ENCODE measurements at regions of chr5 and their contacts with region 1.

Region 1: DNA sequence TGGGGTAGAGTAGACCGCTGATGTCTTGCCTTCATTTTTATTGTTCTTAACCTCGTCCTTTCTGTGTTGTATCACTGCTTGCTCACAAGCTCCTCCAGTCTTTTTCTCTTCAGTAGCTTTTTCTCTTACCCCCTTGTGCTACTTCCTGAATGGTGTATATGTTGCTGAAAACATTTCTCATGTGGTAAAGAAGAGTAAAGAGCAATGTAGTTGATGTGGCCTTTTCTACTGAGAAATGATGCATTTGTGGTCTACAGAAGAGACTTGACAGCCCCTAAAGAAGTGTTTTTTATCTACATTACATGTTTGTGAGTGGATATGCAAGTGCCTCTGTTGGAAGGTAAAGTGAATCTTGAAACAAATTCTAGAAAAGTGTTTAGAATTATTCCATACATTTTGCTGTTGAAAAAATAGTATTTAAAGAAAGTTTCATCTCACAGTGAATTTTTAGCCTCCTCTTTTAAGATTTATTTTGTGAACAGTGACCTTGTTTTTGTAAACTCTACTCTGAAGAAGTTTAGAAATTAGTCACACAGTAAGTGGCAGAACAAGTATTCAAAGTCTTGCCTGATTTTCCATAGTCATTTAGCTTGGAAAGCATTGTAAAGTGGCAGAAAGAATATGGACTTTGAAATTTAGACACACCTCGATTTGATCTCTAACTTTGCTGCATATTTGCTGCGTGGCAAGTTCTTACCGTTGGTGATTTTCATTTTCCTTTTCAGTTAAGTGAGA is 17.4 kb downstream of the CDC42SE2 start:
- DNase-seq: peak in 4 of 10 donors; percentile 64 to 90 (median 82)
- ATAC-seq: peak; percentile 78 to 87
- H3K4me3 Mint-ChIP-seq: peak overlapping the region; percentile 75 to 89 (median 79)
- H3K27ac Mint-ChIP-seq: peak overlapping the region; percentile 83 to 98 (median 96)
- H3K4me1 Mint-ChIP-seq: peaks cover 35 to 94% (median 76%) of the 10 kb centered on the region in 4 donors
- H3K27me3 Mint-ChIP-seq: peaks cover 0 to 7% (median 0%) of the 10 kb centered on the region in 5 donors

Region 2: DNA sequence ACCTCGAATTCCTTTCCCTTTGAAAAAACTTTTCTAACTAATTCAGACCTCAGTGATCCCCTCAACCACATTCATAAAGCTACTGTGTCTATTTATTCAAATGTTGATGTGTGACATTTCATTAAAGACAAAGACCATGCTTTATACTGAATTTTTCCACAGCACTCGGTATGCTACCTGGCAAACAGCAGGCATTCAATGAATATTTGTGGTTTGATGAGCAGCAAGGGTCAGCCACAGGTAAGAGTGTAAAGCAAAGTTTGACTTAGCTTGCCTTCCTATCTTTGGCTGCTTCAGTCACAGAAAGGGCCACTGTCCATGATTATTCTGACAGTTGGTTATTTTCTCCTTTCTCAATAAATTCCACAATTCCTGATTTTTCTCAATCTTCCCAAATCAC is 22.6 kb before region 1 on chr5:
- POLR2A ChIA-PET with region 1: interaction called, 148 read pairs
- DNase-seq: no peak
- ATAC-seq: no peak
- H3K4me3 Mint-ChIP-seq: peak overlapping the region; percentile 65 to 93 (median 78)
- H3K27ac Mint-ChIP-seq: peak overlapping the region; percentile 45 to 98 (median 90)
- H3K4me1 Mint-ChIP-seq: peaks cover 25 to 87% (median 75%) of the 10 kb centered on the region in 4 donors
- H3K27me3 Mint-ChIP-seq: no peaks in the 10 kb centered on the region

Region 3: GRCh38 chr5:131270809-131271208 is 10.5 kb before region 1 on chr5:
- POLR2A ChIA-PET with region 1: interaction called, 148 read pairs
- DNase-seq: no peak
- ATAC-seq: no peak
- H3K4me3 Mint-ChIP-seq: peak overlapping the region; percentile 73 to 98 (median 88)
- H3K27ac Mint-ChIP-seq: peak overlapping the region; percentile 91 to 98 (median 94)
- H3K4me1 Mint-ChIP-seq: peaks cover 34 to 86% (median 66%) of the 10 kb centered on the region in 4 donors
- H3K27me3 Mint-ChIP-seq: no peaks in the 10 kb centered on the region

Region 4: GRCh38 chr5:131382407-131383395 is 101.4 kb after region 1 on chr5:
- POLR2A ChIA-PET with region 1: interaction called, 14 read pairs
- DNase-seq: peak in 9 of 10 donors; percentile 36 to 86 (median 67)
- ATAC-seq: peak; percentile 57 to 68
- H3K4me3 Mint-ChIP-seq: peak overlapping the region; percentile 47 to 84 (median 71)
- H3K27ac Mint-ChIP-seq: peak overlapping the region; percentile 97 to 100 (median 99)
- H3K4me1 Mint-ChIP-seq: peaks cover 41 to 93% (median 89%) of the 10 kb centered on the region in 4 donors
- H3K27me3 Mint-ChIP-seq: no peaks in the 10 kb centered on the region

Measured in naive thymus-derived CD8-positive, alpha-beta T cell (primary cell).